Heart right ventricle (tissue), 16 donors: ENCODE measurements at regions of chr1 and their contacts with region 1.

Region 1: GRCh38 chr1:159999204-159999603 is 32.6 kb downstream of the PIGM start:
- DNase-seq: no peak
- ATAC-seq: no peak
- H3K4me3 ChIP-seq: no peak overlapping the region
- H3K27ac ChIP-seq: no peak overlapping the region
- H3K4me1 ChIP-seq: peaks cover 0 to 5% (median 0%) of the 10 kb centered on the region in 9 donors
- H3K27me3 ChIP-seq: peaks cover 0 to 17% (median 0%) of the 10 kb centered on the region in 7 donors
- CTCF ChIP-seq: no peak

Region 2: DNA sequence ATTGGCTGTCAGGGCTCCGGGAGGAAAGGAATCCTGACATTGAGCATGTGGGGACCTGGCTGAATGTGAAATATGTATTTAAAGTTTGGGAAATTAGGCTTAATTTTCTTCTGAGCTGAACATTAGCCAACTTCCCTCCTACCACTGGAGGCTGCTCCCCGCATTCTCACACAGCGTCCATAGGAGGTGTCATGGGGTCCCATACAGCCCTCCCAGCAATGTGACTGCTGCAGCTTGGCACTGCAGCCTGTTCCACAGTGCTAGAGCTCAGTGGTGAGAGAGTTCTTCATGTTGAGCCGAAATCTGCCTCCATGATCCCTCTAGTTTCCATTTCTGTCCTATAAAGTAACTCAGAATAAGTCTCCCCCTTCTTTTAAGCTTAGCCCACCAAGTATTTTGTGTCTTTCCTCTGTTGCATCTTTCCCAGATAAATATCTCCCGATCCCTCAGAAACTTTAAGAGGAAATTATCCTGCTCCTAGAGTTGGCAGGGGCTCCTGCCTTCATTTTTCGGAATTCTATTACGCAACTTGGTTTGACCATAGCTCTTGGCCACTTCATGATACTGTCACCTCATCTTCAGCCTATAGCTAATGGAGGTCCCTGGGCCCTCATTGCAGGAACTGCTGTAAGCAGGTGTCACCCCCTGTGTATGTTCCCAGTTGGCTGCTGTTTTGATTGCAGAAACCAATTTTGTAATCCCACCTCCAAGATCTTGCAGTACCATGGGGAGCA is 195.1 kb before region 1 on chr1:
- intact Hi-C with region 1: loop called in 3 of 10 experiments (anchors 2 to 10 kb)
- DNase-seq: no peak
- ATAC-seq: no peak
- H3K4me3 ChIP-seq: no peak overlapping the region
- H3K27ac ChIP-seq: peak overlapping the region in 1 of 10 donors; percentile 15
- H3K4me1 ChIP-seq: peaks cover 0 to 39% (median 0%) of the 10 kb centered on the region in 9 donors
- H3K27me3 ChIP-seq: no peaks in the 10 kb centered on the region
- CTCF ChIP-seq: no peak

Region 3: GRCh38 chr1:159877695-159878444 is 121.3 kb before region 1 on chr1:
- intact Hi-C with region 1: no loop called
- DNase-seq: no peak
- ATAC-seq: no peak
- H3K4me3 ChIP-seq: no peak overlapping the region
- H3K27ac ChIP-seq: no peak overlapping the region
- H3K4me1 ChIP-seq: peaks cover 0 to 33% (median 0%) of the 10 kb centered on the region in 9 donors
- H3K27me3 ChIP-seq: peaks cover 0 to 6% (median 0%) of the 10 kb centered on the region in 7 donors
- CTCF ChIP-seq: no peak